Kidney (tissue), 22 donors: ENCODE measurements at regions of chr11 and their contacts with region 1.

Region 1: DNA sequence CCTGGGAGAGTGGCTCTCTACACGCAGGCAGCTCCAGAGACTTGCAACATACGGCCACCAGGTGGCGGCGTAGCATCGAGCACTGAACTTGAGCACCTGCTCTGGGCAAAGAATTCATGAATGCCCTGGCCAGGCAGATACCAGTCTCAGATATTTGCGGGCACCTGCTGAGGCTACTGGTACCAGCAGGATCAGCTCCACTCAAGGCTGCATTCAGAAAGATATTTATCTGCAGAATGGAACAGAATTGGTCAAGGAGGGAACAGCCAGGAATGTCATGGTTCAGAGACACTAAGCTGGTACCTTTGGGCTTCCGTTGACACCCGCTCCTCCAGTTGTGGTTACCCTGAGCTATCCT is 10.8 kb upstream of the CCDC86 start:
- DNase-seq: peak; percentile 83 to 90 (median 86)
- H3K4me3 ChIP-seq: no peak overlapping the region
- H3K27ac ChIP-seq: no peak overlapping the region
- H3K4me1 ChIP-seq: no peaks in the 10 kb centered on the region
- H3K27me3 ChIP-seq: no peaks in the 10 kb centered on the region
- CTCF ChIP-seq: peak; percentile 97

Region 2: GRCh38 chr11:60899046-60899936 is 68.2 kb after region 1 on chr11:
- intact Hi-C with region 1: loop called (anchors 5 kb)
- DNase-seq: peak in 4 of 5 donors; percentile 52 to 71 (median 62)
- H3K4me3 ChIP-seq: no peak overlapping the region
- H3K27ac ChIP-seq: no peak overlapping the region
- H3K4me1 ChIP-seq: no peaks in the 10 kb centered on the region
- H3K27me3 ChIP-seq: no peaks in the 10 kb centered on the region
- CTCF ChIP-seq: peak; percentile 95

Region 3: DNA sequence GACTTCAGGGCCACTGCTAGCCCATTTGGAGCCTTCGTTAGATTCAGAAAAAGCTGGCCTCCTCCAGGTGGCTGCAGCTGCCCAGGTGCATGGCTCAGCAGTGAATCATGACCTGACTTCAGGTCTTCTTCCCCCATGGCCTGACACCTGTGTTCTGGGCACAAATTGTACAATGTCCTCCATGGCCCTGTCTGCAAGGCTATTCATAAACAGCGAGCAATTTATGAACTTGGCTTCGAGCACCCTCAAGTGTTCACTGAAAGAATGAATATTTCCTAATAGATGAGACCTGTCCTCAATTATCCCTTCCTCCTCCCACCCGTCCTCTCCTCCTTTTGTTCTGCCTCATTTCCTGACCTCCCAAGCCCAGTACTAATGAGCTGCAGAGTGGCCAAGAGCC is 342.3 kb after region 1 on chr11:
- intact Hi-C with region 1: loop called (anchors 10 kb)
- DNase-seq: peak in 1 of 5 donors; percentile 13
- H3K4me3 ChIP-seq: no peak overlapping the region
- H3K27ac ChIP-seq: no peak overlapping the region
- H3K4me1 ChIP-seq: no peaks in the 10 kb centered on the region
- H3K27me3 ChIP-seq: no peaks in the 10 kb centered on the region
- CTCF ChIP-seq: no peak